Transverse colon (tissue), 4 donors: ENCODE measurements at regions of chr2 and their contacts with region 1.

Region 1: DNA sequence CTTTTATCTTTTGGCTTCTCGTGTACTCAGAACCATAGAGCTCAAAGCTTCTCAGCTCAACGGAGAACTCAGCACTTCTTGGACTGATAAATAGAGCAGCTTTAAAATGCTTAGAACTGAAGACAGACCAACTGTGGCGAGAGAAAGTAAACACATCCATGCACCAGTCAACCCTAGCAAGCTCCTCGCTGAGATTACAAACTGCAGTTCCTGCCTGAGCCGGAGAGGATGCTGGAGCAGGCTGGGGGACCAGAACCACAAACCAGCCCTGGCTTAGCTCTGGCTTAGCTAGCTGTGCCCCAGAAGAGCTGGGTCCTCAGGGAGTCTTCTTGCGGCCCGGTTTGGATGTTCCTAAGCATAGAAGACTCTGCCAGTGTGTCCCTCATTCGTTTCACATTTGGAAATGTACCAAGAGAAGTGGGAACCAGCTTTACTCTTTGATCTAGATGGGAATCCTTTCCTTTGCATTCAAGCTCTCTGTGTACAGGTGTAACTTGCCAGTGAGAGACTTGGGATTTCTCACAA is 5.6 kb downstream of the PAX8 start:
- DNase-seq: no peak
- H3K4me3 ChIP-seq: no peak overlapping the region
- H3K27ac ChIP-seq: no peak overlapping the region
- H3K4me1 ChIP-seq: peaks cover 0 to 9% (median 2%) of the 10 kb centered on the region in 4 donors
- H3K27me3 ChIP-seq: peaks cover 77% of the 10 kb centered on the region
- CTCF ChIP-seq: no peak
- EP300 ChIP-seq: no peak
- POLR2A ChIP-seq: no peak

Region 2: GRCh38 chr2:113309655-113310387 is 36.7 kb after region 1 on chr2:
- in situ Hi-C with region 1: no loop called
- intact Hi-C with region 1: loop called (anchors 2 kb)
- DNase-seq: no peak
- H3K4me3 ChIP-seq: no peak overlapping the region
- H3K27ac ChIP-seq: no peak overlapping the region
- H3K4me1 ChIP-seq: no peaks in the 10 kb centered on the region
- H3K27me3 ChIP-seq: no peaks in the 10 kb centered on the region
- CTCF ChIP-seq: no peak
- EP300 ChIP-seq: no peak
- POLR2A ChIP-seq: no peak